Endothelial cell of umbilical vein (primary cell): ENCODE measurements at regions of chr14 and their contacts with region 1.

Region 1: DNA sequence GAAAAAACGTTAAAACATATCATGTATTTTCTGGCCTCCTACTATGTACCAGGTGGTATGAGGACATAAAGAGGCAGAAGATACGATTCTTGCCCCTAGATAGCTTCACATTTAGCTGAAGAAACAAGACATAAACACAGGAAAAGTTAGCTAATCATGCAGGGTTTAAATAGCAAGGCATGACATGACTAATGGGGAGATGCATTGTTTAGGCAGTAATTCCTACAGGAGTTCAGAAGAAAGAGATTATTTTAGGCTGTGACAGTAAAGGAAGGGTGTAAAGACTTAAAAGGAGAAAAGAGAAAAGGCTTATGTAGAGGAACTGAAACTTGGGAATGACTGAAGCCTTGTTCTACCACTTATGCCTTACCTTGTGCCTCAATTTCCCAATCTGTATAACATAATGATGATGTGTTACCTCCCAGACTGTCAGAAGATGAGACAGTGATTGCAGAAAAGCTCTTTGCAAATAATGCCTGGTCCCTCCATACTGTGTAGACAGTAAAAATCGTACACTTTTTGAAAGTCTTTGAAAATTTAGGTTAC is 44.4 kb downstream of the PRKCH start:
- DNase-seq: peak; percentile 78
- H3K4me3 ChIP-seq: peak overlapping the region in 1 of 3 experiments; percentile 20
- H3K27ac ChIP-seq: peak overlapping the region; percentile 36
- H3K4me1 ChIP-seq: peaks cover 48% of the 10 kb centered on the region
- H3K27me3 ChIP-seq: no peaks in the 10 kb centered on the region
- CTCF ChIP-seq: no peak
- POLR2A ChIP-seq: no peak

Region 2: GRCh38 chr14:61344437-61345150 is 21.1 kb before region 1 on chr14:
- CTCF ChIA-PET with region 1: interaction called, 3 read pairs
- POLR2A ChIA-PET with region 1: no interaction called
- dilution Hi-C with region 1: no loop called
- intact Hi-C with region 1: loop called (anchors 1 kb)
- DNase-seq: no peak
- H3K4me3 ChIP-seq: no peak overlapping the region
- H3K27ac ChIP-seq: peak overlapping the region; percentile 27
- H3K4me1 ChIP-seq: peaks cover 77% of the 10 kb centered on the region
- H3K27me3 ChIP-seq: no peaks in the 10 kb centered on the region
- CTCF ChIP-seq: no peak
- POLR2A ChIP-seq: no peak

Region 3: GRCh38 chr14:61388173-61388975 is 22.6 kb after region 1 on chr14:
- CTCF ChIA-PET with region 1: no interaction called
- POLR2A ChIA-PET with region 1: no interaction called
- dilution Hi-C with region 1: no loop called
- intact Hi-C with region 1: loop called (anchors 2 kb)
- DNase-seq: peak; percentile 69
- H3K4me3 ChIP-seq: no peak overlapping the region
- H3K27ac ChIP-seq: peak overlapping the region; percentile 44
- H3K4me1 ChIP-seq: peaks cover 29% of the 10 kb centered on the region
- H3K27me3 ChIP-seq: no peaks in the 10 kb centered on the region
- CTCF ChIP-seq: no peak
- POLR2A ChIP-seq: no peak

Region 4: GRCh38 chr14:61420326-61420725 is 54.6 kb after region 1 on chr14:
- CTCF ChIA-PET with region 1: no interaction called
- POLR2A ChIA-PET with region 1: no interaction called
- dilution Hi-C with region 1: no loop called
- intact Hi-C with region 1: no loop called
- DNase-seq: peak; percentile 43
- H3K4me3 ChIP-seq: no peak overlapping the region
- H3K27ac ChIP-seq: no peak overlapping the region
- H3K4me1 ChIP-seq: peaks cover 46% of the 10 kb centered on the region
- H3K27me3 ChIP-seq: no peaks in the 10 kb centered on the region
- CTCF ChIP-seq: no peak
- POLR2A ChIP-seq: no peak

Region 5: GRCh38 chr14:61456720-61457119 is 91.0 kb after region 1 on chr14:
- CTCF ChIA-PET with region 1: no interaction called
- POLR2A ChIA-PET with region 1: no interaction called
- dilution Hi-C with region 1: no loop called
- intact Hi-C with region 1: loop called (anchors 2 kb)
- DNase-seq: peak; percentile 72
- H3K4me3 ChIP-seq: no peak overlapping the region
- H3K27ac ChIP-seq: no peak overlapping the region
- H3K4me1 ChIP-seq: peaks cover 22% of the 10 kb centered on the region
- H3K27me3 ChIP-seq: no peaks in the 10 kb centered on the region
- CTCF ChIP-seq: peak; percentile 75 to 79
- POLR2A ChIP-seq: no peak